ENCODE measurements at regions of chr11 and their contacts with region 1.

Region 1: DNA sequence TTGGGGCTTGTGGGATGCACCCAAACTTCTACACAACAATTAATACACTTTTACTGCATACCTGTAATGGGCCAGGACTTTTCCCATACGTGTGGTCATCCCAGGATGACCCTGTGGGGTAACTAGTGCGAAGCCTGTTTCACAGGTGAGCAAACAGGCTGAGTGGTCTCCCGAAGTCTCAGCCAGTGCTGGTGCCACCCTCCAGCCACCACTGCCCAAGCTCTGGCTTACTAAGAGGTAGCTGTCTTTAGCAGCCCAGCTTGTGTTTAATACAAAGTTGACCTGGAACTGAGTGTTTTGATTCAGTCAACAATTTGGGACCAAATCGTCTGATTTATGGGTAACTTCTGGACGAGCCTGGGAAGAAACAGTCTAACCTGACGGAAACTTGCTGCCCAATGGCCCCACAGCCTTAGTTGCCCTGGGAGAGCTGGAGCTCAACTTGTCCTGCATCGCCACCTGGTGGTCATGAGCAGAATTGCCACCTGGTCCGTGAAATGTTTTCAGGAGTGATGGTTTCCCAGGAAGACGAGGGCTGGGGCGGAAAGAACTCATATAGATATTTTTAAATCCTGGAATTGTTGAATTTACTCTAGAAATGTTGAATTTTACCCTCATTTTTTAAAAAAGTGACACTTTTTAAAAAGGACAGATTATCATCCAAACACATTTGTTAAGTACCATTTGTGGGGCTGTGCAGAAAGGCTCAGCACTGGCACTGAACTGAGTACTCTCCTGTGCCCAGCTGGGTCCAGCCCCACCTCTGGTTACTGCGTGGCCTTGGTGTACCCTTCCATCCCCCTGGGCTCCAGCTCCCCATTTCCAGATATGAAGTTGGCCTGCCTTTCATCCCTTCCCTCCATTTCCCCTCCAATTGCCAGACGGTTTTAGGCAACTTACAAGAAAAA is 95.5 kb upstream of the PARVA start:
- DNase-seq: peak; percentile 82
- H3K4me3 Mint-ChIP-seq: no peak overlapping the region
- H3K27ac Mint-ChIP-seq: no peak overlapping the region
- H3K4me1 Mint-ChIP-seq: no peaks in the 10 kb centered on the region
- H3K27me3 Mint-ChIP-seq: peaks cover 2% of the 10 kb centered on the region

Region 2: GRCh38 chr11:12043959-12044819 is 237.6 kb before region 1 on chr11:
- CTCF ChIA-PET with region 1: interaction called, 56 read pairs
- POLR2A ChIA-PET with region 1: no interaction called
- DNase-seq: peak; percentile 65
- H3K4me3 Mint-ChIP-seq: no peak overlapping the region
- H3K27ac Mint-ChIP-seq: no peak overlapping the region
- H3K4me1 Mint-ChIP-seq: peaks cover 11% of the 10 kb centered on the region
- H3K27me3 Mint-ChIP-seq: peaks cover 2% of the 10 kb centered on the region

Region 3: GRCh38 chr11:12052676-12053605 is 228.9 kb before region 1 on chr11:
- CTCF ChIA-PET with region 1: interaction called, 56 read pairs
- POLR2A ChIA-PET with region 1: no interaction called
- DNase-seq: peak; percentile 34
- H3K4me3 Mint-ChIP-seq: no peak overlapping the region
- H3K27ac Mint-ChIP-seq: peak overlapping the region; percentile 67
- H3K4me1 Mint-ChIP-seq: peaks cover 7% of the 10 kb centered on the region
- H3K27me3 Mint-ChIP-seq: no peaks in the 10 kb centered on the region

Region 4: GRCh38 chr11:12235947-12236743 is 45.7 kb before region 1 on chr11:
- CTCF ChIA-PET with region 1: interaction called, 14 read pairs
- POLR2A ChIA-PET with region 1: no interaction called
- DNase-seq: peak; percentile 75
- H3K4me3 Mint-ChIP-seq: peak overlapping the region; percentile 56
- H3K27ac Mint-ChIP-seq: peak overlapping the region; percentile 95
- H3K4me1 Mint-ChIP-seq: peaks cover 38% of the 10 kb centered on the region
- H3K27me3 Mint-ChIP-seq: no peaks in the 10 kb centered on the region

Region 5: GRCh38 chr11:12263141-12263693 is 18.6 kb before region 1 on chr11:
- CTCF ChIA-PET with region 1: interaction called, 13 read pairs
- POLR2A ChIA-PET with region 1: no interaction called
- DNase-seq: no peak
- H3K4me3 Mint-ChIP-seq: no peak overlapping the region
- H3K27ac Mint-ChIP-seq: no peak overlapping the region
- H3K4me1 Mint-ChIP-seq: no peaks in the 10 kb centered on the region
- H3K27me3 Mint-ChIP-seq: no peaks in the 10 kb centered on the region

Region 6: DNA sequence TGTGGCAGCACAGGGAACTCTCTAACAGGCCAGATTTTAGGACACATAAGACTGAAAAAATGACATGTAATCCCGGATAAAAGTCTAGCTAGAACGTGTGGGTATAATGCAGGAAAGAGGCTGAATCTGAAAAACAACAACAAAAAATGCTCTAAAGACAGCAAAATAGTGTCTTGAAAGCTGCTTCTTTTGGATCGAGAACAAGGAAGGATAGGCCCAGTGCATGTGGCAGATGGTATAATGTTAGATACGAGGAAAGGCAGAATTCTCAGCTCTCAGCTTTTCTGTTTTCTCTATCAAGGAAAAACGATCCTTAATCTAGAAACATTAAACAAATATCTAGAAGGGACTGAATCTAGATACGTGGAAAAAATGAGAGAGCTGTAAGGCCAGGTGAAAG is 61.7 kb after region 1 on chr11:
- CTCF ChIA-PET with region 1: no interaction called
- POLR2A ChIA-PET with region 1: no interaction called
- DNase-seq: no peak
- H3K4me3 Mint-ChIP-seq: no peak overlapping the region
- H3K27ac Mint-ChIP-seq: no peak overlapping the region
- H3K4me1 Mint-ChIP-seq: no peaks in the 10 kb centered on the region
- H3K27me3 Mint-ChIP-seq: no peaks in the 10 kb centered on the region

Region 7: DNA sequence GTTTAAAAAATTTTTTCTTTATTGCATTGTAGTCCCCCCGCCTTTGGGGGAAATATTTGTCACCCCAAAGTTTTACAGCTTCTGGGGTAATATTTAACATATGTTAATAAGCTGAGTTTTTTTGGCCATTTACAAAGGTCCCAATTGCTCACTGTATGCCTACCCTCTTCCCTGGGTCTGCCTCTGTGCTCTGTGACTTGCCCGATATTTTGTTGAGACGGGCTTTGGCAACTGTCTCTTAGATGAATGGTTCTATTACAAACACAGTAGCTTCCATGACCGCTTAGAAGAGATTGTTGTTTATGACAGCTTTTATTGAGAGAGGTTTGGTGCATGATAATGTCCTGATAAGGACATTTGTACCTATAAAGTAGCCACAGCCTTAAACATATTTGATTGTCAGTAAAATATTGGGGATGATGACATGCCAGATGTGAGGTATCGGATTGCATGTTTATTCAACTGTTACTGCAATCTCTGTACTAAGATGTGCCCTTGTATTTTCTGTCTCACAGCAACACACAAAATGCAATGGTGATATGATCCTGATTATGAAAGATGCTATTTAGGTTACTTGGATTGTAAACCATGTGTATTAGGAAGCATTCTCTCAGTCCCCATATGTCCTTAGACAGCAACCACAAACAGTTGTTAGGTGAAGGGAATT is 495.5 kb after region 1 on chr11:
- CTCF ChIA-PET with region 1: no interaction called
- POLR2A ChIA-PET with region 1: no interaction called
- DNase-seq: no peak
- H3K4me3 Mint-ChIP-seq: no peak overlapping the region
- H3K27ac Mint-ChIP-seq: no peak overlapping the region
- H3K4me1 Mint-ChIP-seq: no peaks in the 10 kb centered on the region
- H3K27me3 Mint-ChIP-seq: peaks cover 21% of the 10 kb centered on the region

Measured in activated CD4-positive, alpha-beta T cell treated with anti-CD3 and anti-CD28 coated beads, Interleukin-2, amount 10 ng/mL, durations not matched to agents 7 days and 5 days (primary cell).